ENCODE measurements at regions of chr11 and their contacts with region 1.

Region 1: GRCh38 chr11:101848262-101848661 is 66.5 kb upstream of the CEP126 start:
- DNase-seq: peak in 1 of 3 donors; percentile 38
- ATAC-seq: no peak
- H3K4me3 ChIP-seq: no peak overlapping the region
- H3K4me1 ChIP-seq: no peaks in the 10 kb centered on the region
- CTCF ChIP-seq: no peak

Region 2: DNA sequence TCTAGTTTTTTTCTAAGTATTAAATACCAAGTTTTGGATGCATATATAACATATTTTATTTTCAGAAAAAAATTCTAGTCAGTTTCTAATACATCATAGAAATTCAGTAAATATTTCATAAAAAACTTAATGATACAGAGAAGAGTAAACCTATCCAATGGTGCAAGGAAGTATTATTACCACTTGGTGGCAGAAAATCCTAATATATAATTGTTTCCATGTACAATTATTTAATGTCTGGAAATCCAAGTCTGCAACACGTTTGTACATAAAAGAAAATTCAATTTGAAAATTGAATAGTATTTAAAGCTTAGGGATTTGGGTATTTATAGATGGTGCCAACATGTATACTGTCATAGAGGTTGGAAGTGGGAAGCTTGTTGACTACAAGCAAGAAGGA is 391.4 kb before region 1 on chr11:
- intact Hi-C with region 1: loop called in 1 of 2 experiments (anchors 10 kb)
- DNase-seq: no peak
- ATAC-seq: no peak
- H3K4me3 ChIP-seq: no peak overlapping the region
- H3K4me1 ChIP-seq: no peaks in the 10 kb centered on the region
- CTCF ChIP-seq: no peak

Measured in mucosa of descending colon (tissue), 3 donors.